H1 (cell line): ENCODE measurements at regions of chr13 and their contacts with region 1.

Region 1: DNA sequence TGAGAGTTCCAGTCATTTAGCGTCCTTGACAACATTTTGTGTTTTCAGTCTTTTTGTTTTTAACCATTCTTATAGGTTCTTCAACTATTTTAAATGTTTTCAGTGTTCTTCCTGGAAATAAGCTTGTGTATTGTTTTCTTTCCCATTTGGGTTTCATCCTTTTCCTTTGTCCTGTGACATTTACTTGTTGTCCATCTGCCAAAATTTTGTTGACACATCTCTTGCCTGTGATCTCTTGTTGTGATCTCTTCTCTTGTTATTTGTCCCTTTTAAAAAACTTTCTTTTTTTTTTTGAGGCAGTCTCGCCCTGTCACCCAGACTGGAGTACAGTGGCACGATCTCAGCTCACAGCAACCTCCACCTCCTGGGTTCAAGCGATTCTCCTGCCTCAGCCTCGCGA is 96.5 kb downstream of the PDS5B start:
- DNase-seq: no peak
- H3K4me3 ChIP-seq: no peak overlapping the region
- H3K27ac ChIP-seq: no peak overlapping the region
- H3K4me1 ChIP-seq: no peaks in the 10 kb centered on the region
- H3K27me3 ChIP-seq: no peaks in the 10 kb centered on the region
- CTCF ChIP-seq: no peak
- EP300 ChIP-seq: no peak
- POLR2A ChIP-seq: no peak
- RAD21 ChIP-seq: no peak

Region 2: DNA sequence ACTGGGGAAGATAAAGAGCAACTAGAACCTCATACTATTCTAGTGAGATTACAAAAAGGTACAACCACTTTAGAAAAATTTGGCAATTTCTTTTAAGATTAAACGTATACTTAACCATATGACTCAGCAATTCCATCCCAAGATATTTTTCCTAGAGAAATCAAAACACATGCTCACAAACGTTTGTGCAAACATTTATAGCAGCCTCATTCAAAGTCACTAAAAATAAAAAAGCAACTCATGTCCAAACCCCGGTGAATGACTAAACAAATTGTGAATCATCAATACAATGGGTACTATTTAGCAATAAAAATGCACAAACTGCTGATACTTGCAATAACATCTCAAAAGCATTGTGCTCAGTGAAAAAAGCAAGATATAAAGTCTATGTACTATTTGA is 529.7 kb before region 1 on chr13:
- CTCF ChIA-PET with region 1: no interaction called
- POLR2A ChIA-PET with region 1: no interaction called
- DNase-seq: no peak
- H3K4me3 ChIP-seq: no peak overlapping the region
- H3K27ac ChIP-seq: no peak overlapping the region
- H3K4me1 ChIP-seq: no peaks in the 10 kb centered on the region
- H3K27me3 ChIP-seq: no peaks in the 10 kb centered on the region
- CTCF ChIP-seq: no peak
- EP300 ChIP-seq: no peak
- POLR2A ChIP-seq: no peak
- RAD21 ChIP-seq: no peak

Region 3: DNA sequence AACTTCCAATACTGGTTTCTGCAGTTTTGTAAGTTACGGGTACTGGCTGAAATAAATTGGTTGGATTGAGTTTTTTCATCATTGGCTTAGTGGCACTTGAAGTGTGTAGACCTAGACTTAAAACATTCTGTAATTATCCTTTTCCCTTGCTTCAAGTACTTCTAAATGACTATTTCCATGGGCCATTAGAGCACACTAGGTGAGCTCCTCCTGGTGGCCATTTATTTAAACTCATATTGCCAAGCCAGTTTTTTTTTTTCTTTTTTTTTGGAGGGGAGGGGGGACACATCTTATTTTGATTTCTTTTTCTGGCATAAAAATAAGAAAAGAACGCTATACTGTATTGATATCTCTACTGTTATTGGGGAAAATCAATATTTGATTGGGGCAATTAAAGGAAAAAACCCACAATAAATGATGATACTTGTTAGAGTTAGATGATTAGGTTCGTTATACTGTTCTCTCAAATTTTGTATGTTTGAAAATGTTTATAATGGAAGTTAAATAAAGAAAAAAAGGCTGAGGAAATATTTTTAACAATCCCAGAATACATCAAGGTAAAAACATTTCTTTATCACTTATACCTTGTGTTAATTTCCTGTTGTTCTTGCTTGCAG is 13.6 kb before region 1 on chr13:
- CTCF ChIA-PET with region 1: interaction called, 12 read pairs
- POLR2A ChIA-PET with region 1: no interaction called
- DNase-seq: no peak
- H3K4me3 ChIP-seq: no peak overlapping the region
- H3K27ac ChIP-seq: no peak overlapping the region
- H3K4me1 ChIP-seq: no peaks in the 10 kb centered on the region
- H3K27me3 ChIP-seq: no peaks in the 10 kb centered on the region
- CTCF ChIP-seq: peak in 2 of 3 experiments; percentile 45 to 59; a peak in 2 of 4 replicates
- EP300 ChIP-seq: no peak
- POLR2A ChIP-seq: no peak
- RAD21 ChIP-seq: peak; percentile 51 to 56